K562 (cell line): ENCODE measurements at regions of chr10 and their contacts with region 1.

Region 1: DNA sequence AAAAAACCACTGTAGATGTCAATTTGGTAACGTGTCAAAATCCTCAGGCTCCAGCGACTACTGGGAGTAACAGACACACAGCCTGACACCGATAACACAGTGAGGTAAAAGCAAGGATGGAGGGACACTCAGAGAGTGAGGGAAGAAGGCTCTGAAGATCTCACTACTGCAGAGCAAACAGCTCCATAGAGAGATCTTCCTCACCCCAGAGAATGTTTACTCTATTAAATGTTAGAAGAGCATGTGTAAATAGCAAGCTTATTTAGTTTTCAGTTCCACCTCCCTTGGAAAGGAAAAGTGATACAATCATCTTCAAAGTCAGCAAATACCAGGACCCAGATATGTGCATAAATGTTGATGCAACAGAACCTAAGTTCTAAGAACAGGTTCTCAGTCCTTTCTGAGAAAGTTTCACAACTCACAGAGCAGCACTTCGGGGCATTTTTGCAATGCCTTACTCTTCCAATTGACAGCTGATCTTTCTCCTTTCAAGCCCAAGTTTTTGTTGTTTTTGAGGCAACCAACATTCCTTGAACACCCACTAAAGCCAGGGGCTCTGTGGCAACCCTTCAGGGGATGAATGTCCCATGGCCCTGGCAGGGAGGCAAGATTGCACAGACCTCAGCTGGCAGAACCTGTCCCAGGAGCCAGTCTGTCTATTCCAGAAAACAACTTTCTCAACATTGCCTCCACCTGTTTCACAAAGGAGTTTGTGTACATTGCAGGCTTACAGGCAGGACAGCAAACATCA is 177.4 kb downstream of the SFMBT2 start:
- DNase-seq: peak; percentile 19 to 73 (median 38)
- ATAC-seq: peak; percentile 89
- H3K4me3 ChIP-seq: no peak overlapping the region
- H3K27ac ChIP-seq: peak overlapping the region; percentile 72
- H3K4me1 ChIP-seq: peaks cover 10 to 43% of the 10 kb centered on the region in 2 experiments
- H3K27me3 ChIP-seq: no peaks in the 10 kb centered on the region
- CTCF ChIP-seq: no peak
- EP300 ChIP-seq: peak; percentile 41
- POLR2A ChIP-seq: no peak
- RAD21 ChIP-seq: no peak

Region 2: GRCh38 chr10:7133278-7133677 is 100.2 kb before region 1 on chr10:
- CTCF ChIA-PET with region 1: no interaction called
- POLR2A ChIA-PET with region 1: no interaction called
- in situ Hi-C with region 1: no loop called
- intact Hi-C with region 1: no loop called
- DNase-seq: peak in 2 of 4 experiments; percentile 10 to 15
- ATAC-seq: no peak
- H3K4me3 ChIP-seq: no peak overlapping the region
- H3K27ac ChIP-seq: no peak overlapping the region
- H3K4me1 ChIP-seq: peaks cover 2 to 5% of the 10 kb centered on the region in 2 experiments; a peak in 2 of 5 replicates
- H3K27me3 ChIP-seq: no peaks in the 10 kb centered on the region; a peak in 1 of 5 replicates
- CTCF ChIP-seq: no peak
- EP300 ChIP-seq: no peak
- POLR2A ChIP-seq: no peak
- RAD21 ChIP-seq: no peak

Region 3: GRCh38 chr10:7251696-7252465 is 18.4 kb after region 1 on chr10:
- CTCF ChIA-PET with region 1: no interaction called
- POLR2A ChIA-PET with region 1: interaction called, 3 read pairs
- in situ Hi-C with region 1: no loop called
- intact Hi-C with region 1: loop called (anchors 2 kb)
- DNase-seq: peak; percentile 64 to 95 (median 79)
- ATAC-seq: peak; percentile 99
- H3K4me3 ChIP-seq: no peak overlapping the region
- H3K27ac ChIP-seq: peak overlapping the region; percentile 81
- H3K4me1 ChIP-seq: peaks cover 7 to 20% of the 10 kb centered on the region in 2 experiments; a peak in 3 of 5 replicates
- H3K27me3 ChIP-seq: no peaks in the 10 kb centered on the region
- CTCF ChIP-seq: no peak
- EP300 ChIP-seq: peak; percentile 96
- POLR2A ChIP-seq: no peak
- RAD21 ChIP-seq: peak in 1 of 2 experiments; percentile 37; a peak in 1 of 4 replicates